ENCODE measurements at regions of chr17 and their contacts with region 1.

Region 1: GRCh38 chr17:51461578-51462004 is 201.2 kb downstream of the UTP18 start:
- DNase-seq: peak; percentile 81
- ATAC-seq: peak; percentile 88 to 98
- H3K4me3 ChIP-seq: peak overlapping the region; percentile 24; the same call in 2 of the 3 replicates
- H3K27ac ChIP-seq: peak overlapping the region in 1 of 2 experiments; percentile 26; a peak in 1 of 6 replicates
- H3K4me1 ChIP-seq: peaks cover 14% of the 10 kb centered on the region
- CTCF ChIP-seq: peak; percentile 85
- EP300 ChIP-seq: no peak
- POLR2A ChIP-seq: no peak
- RAD21 ChIP-seq: peak; percentile 62 to 73

Region 2: GRCh38 chr17:51428666-51429495 is 32.7 kb before region 1 on chr17:
- CTCF ChIA-PET with region 1: interaction called, 10 read pairs
- POLR2A ChIA-PET with region 1: no interaction called
- DNase-seq: no peak
- ATAC-seq: no peak
- H3K4me3 ChIP-seq: no peak overlapping the region
- H3K27ac ChIP-seq: peak overlapping the region in 1 of 2 experiments; percentile 7; a peak in 1 of 6 replicates
- H3K4me1 ChIP-seq: peaks cover 6% of the 10 kb centered on the region; the same call in 2 of the 3 replicates
- CTCF ChIP-seq: no peak
- EP300 ChIP-seq: no peak
- POLR2A ChIP-seq: no peak
- RAD21 ChIP-seq: no peak

Region 3: GRCh38 chr17:51445946-51446533 is 15.6 kb before region 1 on chr17:
- CTCF ChIA-PET with region 1: interaction called, 32 read pairs
- POLR2A ChIA-PET with region 1: no interaction called
- DNase-seq: no peak
- ATAC-seq: no peak
- H3K4me3 ChIP-seq: no peak overlapping the region
- H3K27ac ChIP-seq: no peak overlapping the region
- H3K4me1 ChIP-seq: no peaks in the 10 kb centered on the region
- CTCF ChIP-seq: no peak
- EP300 ChIP-seq: no peak
- POLR2A ChIP-seq: no peak
- RAD21 ChIP-seq: no peak

Region 4: DNA sequence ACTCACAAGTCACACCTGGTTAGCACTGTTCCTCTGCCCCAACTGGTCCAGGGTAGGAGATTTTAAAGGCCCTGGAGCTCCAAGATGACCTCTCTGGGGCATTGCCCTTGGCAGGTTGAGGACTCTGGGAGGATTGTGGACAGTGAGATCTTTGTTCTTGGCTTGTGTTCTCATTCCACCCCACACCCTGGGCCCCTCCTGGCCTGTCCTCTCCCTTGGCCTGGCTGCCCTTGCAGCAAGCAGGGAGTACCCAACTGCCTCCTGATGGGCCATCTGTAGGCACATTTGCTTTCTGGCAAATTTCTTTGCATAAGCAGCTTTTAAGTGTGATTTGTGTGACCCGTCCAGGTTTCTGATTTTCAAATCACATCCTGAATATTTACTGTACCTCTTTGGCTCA is 38.3 kb after region 1 on chr17:
- CTCF ChIA-PET with region 1: interaction called, 16 read pairs
- POLR2A ChIA-PET with region 1: no interaction called
- DNase-seq: no peak
- ATAC-seq: no peak
- H3K4me3 ChIP-seq: no peak overlapping the region
- H3K27ac ChIP-seq: no peak overlapping the region
- H3K4me1 ChIP-seq: no peaks in the 10 kb centered on the region
- CTCF ChIP-seq: no peak
- EP300 ChIP-seq: no peak
- POLR2A ChIP-seq: no peak
- RAD21 ChIP-seq: no peak

Region 5: DNA sequence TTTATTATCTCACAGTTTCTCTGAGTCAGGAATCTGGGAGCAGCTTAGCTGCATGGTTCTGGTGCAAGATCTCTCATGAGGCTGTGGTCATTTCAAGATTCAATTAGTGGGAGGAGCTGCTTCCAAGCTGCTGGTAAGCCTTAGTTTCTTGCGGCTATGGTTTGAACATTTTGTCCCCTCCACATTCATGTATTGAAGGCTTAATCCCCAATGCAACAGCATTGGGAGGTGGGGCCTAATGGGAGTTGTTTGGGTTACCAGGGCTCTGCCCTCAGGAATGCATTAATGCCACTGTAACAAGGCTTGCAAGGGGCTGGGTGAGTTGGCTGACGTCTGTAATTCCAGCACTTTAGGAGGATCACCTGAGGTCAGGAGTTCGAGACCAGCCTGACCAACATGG is 71.6 kb after region 1 on chr17:
- CTCF ChIA-PET with region 1: interaction called, 26 read pairs
- POLR2A ChIA-PET with region 1: no interaction called
- DNase-seq: no peak
- ATAC-seq: no peak
- H3K4me3 ChIP-seq: no peak overlapping the region
- H3K27ac ChIP-seq: no peak overlapping the region
- H3K4me1 ChIP-seq: peaks cover 4% of the 10 kb centered on the region; the same call in 2 of the 3 replicates
- CTCF ChIP-seq: no peak
- EP300 ChIP-seq: no peak
- POLR2A ChIP-seq: no peak
- RAD21 ChIP-seq: no peak

Measured in A549 (cell line).